ENCODE measurements at regions of chr4 and their contacts with region 1.

Region 1: GRCh38 chr4:37389967-37390580 is 145.5 kb downstream of the NWD2 start:
- DNase-seq: peak; percentile 16
- ATAC-seq: peak; percentile 39
- H3K4me3 Mint-ChIP-seq: no peak overlapping the region
- H3K27ac Mint-ChIP-seq: no peak overlapping the region
- H3K4me1 Mint-ChIP-seq: peaks cover 28% of the 10 kb centered on the region
- H3K27me3 Mint-ChIP-seq: no peaks in the 10 kb centered on the region
- CTCF ChIP-seq: peak; percentile 12; the same call in 1 of the 2 replicates

Region 2: GRCh38 chr4:37188100-37188499 is 202.0 kb before region 1 on chr4:
- CTCF ChIA-PET with region 1: interaction called, 10 read pairs
- POLR2A ChIA-PET with region 1: no interaction called
- DNase-seq: peak; percentile 63
- ATAC-seq: peak; percentile 79; the same call in 1 of the 2 replicates
- H3K4me3 Mint-ChIP-seq: no peak overlapping the region
- H3K27ac Mint-ChIP-seq: no peak overlapping the region
- H3K4me1 Mint-ChIP-seq: no peaks in the 10 kb centered on the region
- H3K27me3 Mint-ChIP-seq: no peaks in the 10 kb centered on the region; the same call in 1 of the 2 replicates
- CTCF ChIP-seq: peak; percentile 77

Region 3: GRCh38 chr4:37561803-37562207 is 171.7 kb after region 1 on chr4:
- CTCF ChIA-PET with region 1: no interaction called
- POLR2A ChIA-PET with region 1: no interaction called
- DNase-seq: no peak
- ATAC-seq: no peak
- H3K4me3 Mint-ChIP-seq: no peak overlapping the region
- H3K27ac Mint-ChIP-seq: no peak overlapping the region
- H3K4me1 Mint-ChIP-seq: peaks cover 12% of the 10 kb centered on the region
- H3K27me3 Mint-ChIP-seq: peaks cover 4% of the 10 kb centered on the region
- CTCF ChIP-seq: no peak